ENCODE measurements at regions of chr11 and their contacts with region 1.

Region 1: DNA sequence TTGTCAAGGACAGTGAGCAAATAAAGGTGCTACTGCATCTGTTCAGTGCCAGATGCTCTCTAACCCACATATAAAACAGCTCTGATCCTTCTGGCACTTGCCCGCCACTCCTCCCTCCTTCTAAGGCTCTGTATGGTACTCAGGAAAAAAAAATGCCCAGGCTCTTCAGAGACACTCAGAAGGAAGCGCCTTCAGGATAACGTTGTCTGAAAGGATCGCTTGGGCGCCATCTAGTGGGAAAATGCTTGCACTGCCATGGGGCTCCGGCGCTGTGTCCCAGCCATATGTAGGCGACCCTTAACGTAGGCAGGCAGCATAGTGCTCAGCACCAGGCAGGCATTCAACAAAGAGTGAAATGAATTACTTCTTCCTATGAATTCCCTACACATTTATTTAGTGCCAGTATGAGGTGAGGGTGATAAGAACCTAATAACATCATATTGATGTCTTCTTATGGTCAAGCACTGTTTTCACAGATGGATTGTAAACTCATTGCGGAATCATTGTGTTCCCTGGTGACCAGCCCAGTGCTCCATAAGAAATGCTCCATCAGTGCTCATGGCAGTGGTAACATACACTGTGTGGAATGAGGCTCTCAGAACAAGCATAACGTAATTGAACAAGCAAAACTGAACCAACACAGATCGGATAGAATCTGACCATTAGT is 39.6 kb downstream of the PAMR1 start:
- DNase-seq: peak; percentile 71 to 76
- ATAC-seq: peak; percentile 77 to 89 (median 84)
- H3K4me3 ChIP-seq: no peak overlapping the region
- H3K27ac ChIP-seq: no peak overlapping the region
- H3K4me1 ChIP-seq: no peaks in the 10 kb centered on the region
- H3K27me3 ChIP-seq: peaks cover 0 to 30% (median 3%) of the 10 kb centered on the region in 3 donors
- CTCF ChIP-seq: peak; percentile 89

Region 2: GRCh38 chr11:34926101-34926830 is 559.5 kb before region 1 on chr11:
- intact Hi-C with region 1: loop called in 1 of 2 experiments (anchors 1 kb)
- DNase-seq: no peak
- ATAC-seq: peak in 3 of 4 donors; percentile 61 to 82 (median 65)
- H3K4me3 ChIP-seq: no peak overlapping the region
- H3K27ac ChIP-seq: no peak overlapping the region
- H3K4me1 ChIP-seq: peaks cover 61% of the 10 kb centered on the region
- H3K27me3 ChIP-seq: no peaks in the 10 kb centered on the region
- CTCF ChIP-seq: peak; percentile 78

Region 3: GRCh38 chr11:35683728-35684339 is 198.0 kb after region 1 on chr11:
- intact Hi-C with region 1: no loop called
- DNase-seq: no peak
- ATAC-seq: peak; percentile 42 to 79 (median 62)
- H3K4me3 ChIP-seq: no peak overlapping the region
- H3K27ac ChIP-seq: no peak overlapping the region
- H3K4me1 ChIP-seq: peaks cover 30% of the 10 kb centered on the region
- H3K27me3 ChIP-seq: no peaks in the 10 kb centered on the region
- CTCF ChIP-seq: no peak